CD4-positive, alpha-beta T cell (primary cell): ENCODE measurements at regions of chr15 and their contacts with region 1.

Region 1: GRCh38 chr15:64430000-64430735 is 30.2 kb upstream of the ZNF609 start:
- DNase-seq: peak in 13 of 14 experiments; percentile 17 to 85 (median 37)
- ATAC-seq: peak; percentile 91
- H3K4me3 ChIP-seq: peak overlapping the region; percentile 12
- H3K4me3 Mint-ChIP-seq: peak overlapping the region; percentile 79
- H3K27ac ChIP-seq: peak overlapping the region; percentile 31 to 52
- H3K27ac Mint-ChIP-seq: peak overlapping the region; percentile 97
- H3K4me1 ChIP-seq: peaks cover 36% of the 10 kb centered on the region
- H3K4me1 Mint-ChIP-seq: peaks cover 52% of the 10 kb centered on the region
- H3K27me3 ChIP-seq: no peaks in the 10 kb centered on the region
- H3K27me3 Mint-ChIP-seq: no peaks in the 10 kb centered on the region
- CTCF ChIP-seq: no peak

Region 2: DNA sequence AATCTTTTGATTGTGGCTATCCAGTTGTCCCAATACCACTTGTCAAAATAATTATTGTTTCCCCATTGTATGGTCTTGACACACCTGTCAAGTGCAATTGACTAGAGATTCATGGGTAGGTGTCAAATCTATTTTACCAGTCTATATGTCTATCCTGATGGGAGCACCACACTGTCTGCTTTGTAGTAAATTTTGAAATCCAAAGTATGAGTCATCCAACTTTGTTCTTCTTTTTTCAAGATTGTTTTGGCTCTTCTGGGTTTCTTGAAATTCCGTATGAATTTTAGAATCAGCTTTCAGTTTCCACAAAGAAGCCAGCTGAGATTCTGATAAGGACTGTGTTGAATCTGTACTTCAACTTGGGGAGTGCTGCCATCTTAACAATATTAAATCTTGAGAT is 146.1 kb before region 1 on chr15:
- CTCF ChIA-PET with region 1: no interaction called
- POLR2A ChIA-PET with region 1: no interaction called
- intact Hi-C with region 1: no loop called
- DNase-seq: peak in 2 of 14 experiments; percentile 19 to 24
- ATAC-seq: no peak
- H3K4me3 ChIP-seq: no peak overlapping the region
- H3K4me3 Mint-ChIP-seq: no peak overlapping the region
- H3K27ac ChIP-seq: no peak overlapping the region
- H3K27ac Mint-ChIP-seq: no peak overlapping the region
- H3K4me1 ChIP-seq: no peaks in the 10 kb centered on the region
- H3K4me1 Mint-ChIP-seq: peaks cover 14% of the 10 kb centered on the region
- H3K27me3 ChIP-seq: no peaks in the 10 kb centered on the region
- H3K27me3 Mint-ChIP-seq: no peaks in the 10 kb centered on the region
- CTCF ChIP-seq: no peak

Region 3: DNA sequence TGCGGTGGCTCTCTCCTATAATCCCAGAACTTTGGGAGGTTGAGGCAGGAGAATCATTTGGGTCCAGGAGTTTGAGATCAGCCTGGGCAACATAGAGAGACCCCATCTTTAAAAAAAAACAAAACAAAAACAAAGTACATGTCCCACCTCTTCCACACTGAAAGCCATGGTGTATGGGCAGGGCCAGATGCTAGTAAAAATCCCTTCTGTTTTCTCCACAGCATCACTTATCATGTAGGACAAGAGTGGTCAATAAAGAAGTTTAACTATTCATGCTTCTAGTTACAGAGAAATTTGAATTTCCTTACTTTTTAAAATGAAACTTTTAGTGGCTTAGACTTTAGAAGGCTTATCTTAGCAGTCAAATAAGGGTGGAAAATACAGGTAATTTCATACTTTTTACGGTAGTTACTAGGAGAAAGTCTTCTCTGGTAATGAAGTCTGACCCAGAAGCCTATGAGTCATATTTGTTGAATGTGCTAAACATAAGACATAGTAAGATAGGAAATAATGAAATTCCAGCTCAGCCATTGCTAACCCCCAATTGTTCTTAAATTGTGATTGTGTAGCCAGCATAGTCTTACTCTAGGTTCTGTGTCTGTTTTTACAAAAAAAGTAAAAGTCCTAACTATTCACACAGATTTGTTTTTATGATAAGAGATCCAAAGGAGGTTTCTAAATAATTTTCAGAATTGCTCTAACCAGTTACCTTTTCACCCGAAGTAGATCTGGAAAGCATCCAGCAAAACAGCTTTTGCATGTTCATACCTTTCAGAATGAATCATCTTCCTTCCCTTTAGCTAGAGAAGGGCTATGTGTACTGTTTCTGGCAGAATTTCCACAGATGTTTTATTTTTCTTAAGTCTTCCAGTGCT is 13.8 kb after region 1 on chr15:
- CTCF ChIA-PET with region 1: interaction called, 4 read pairs
- POLR2A ChIA-PET with region 1: interaction called, 5 read pairs
- intact Hi-C with region 1: loop called in 1 of 2 experiments (anchors 2 kb)
- DNase-seq: peak in 3 of 14 experiments; percentile 18 to 32 (median 28)
- ATAC-seq: peak; percentile 57
- H3K4me3 ChIP-seq: no peak overlapping the region
- H3K4me3 Mint-ChIP-seq: peak overlapping the region; percentile 26
- H3K27ac ChIP-seq: peak overlapping the region in 1 of 2 donors; percentile 37
- H3K27ac Mint-ChIP-seq: peak overlapping the region; percentile 77
- H3K4me1 ChIP-seq: peaks cover 16% of the 10 kb centered on the region
- H3K4me1 Mint-ChIP-seq: peaks cover 56% of the 10 kb centered on the region
- H3K27me3 ChIP-seq: no peaks in the 10 kb centered on the region
- H3K27me3 Mint-ChIP-seq: no peaks in the 10 kb centered on the region
- CTCF ChIP-seq: no peak

Region 4: DNA sequence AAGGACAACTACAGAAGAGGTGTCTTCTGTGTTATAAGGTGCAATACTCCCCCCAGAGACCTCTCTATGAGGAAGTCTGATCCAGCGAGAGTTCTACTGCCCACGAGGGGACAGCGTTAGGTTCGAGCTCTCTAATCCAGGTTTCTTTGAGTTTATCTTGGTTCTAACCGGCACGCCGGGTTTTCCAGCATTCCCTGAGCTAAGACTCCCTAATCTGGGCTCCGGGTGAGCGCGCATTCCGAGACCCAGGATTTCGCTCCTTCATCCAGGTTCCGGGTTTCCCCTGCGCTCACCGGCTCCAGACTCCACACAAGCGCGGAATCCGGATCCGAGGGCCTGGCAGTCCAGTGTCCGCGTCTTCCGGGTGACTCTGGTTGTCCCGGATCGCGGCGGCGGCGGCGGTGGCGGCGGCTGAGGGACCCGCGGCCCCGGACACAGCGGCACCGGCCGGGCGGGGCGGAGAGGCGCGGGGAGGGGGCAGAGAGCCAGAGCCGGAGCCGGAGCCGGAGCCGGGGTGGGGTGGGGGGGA is 30.1 kb after region 1 on chr15 and contains the start of gene ZNF609:
- CTCF ChIA-PET with region 1: interaction called, 4 read pairs
- POLR2A ChIA-PET with region 1: interaction called, 22 read pairs
- intact Hi-C with region 1: loop called (anchors 1 to 2 kb)
- DNase-seq: peak; percentile 74 to 91 (median 86)
- ATAC-seq: peak; percentile 80
- H3K4me3 ChIP-seq: peak within 1 kb of the TSS; percentile 71
- H3K4me3 Mint-ChIP-seq: peak within 1 kb of the TSS; percentile 92
- H3K27ac ChIP-seq: peak within 1 kb of the TSS; percentile 52
- H3K27ac Mint-ChIP-seq: peak within 1 kb of the TSS; percentile 87
- H3K4me1 ChIP-seq: peaks cover 46% of the 10 kb centered on the region
- H3K4me1 Mint-ChIP-seq: peaks cover 88% of the 10 kb centered on the region
- H3K27me3 ChIP-seq: no peaks in the 10 kb centered on the region
- H3K27me3 Mint-ChIP-seq: no peaks in the 10 kb centered on the region
- CTCF ChIP-seq: no peak
- total RNA-seq, gene ZNF609: 62.4 to 65.3 TPM